H1 (cell line): ENCODE measurements at regions of chr19 and their contacts with region 1.

Region 1: GRCh38 chr19:40444192-40445028 is at the start of gene SERTAD3:
- DNase-seq: peak; percentile 85 to 97
- H3K4me3 ChIP-seq: peak within 1 kb of the TSS; percentile 97 to 99 (median 98)
- H3K27ac ChIP-seq: peak within 1 kb of the TSS; percentile 89
- H3K4me1 ChIP-seq: peaks cover 3 to 9% (median 7%) of the 10 kb centered on the region in 4 experiments; a peak in 6 of 7 replicates
- H3K27me3 ChIP-seq: no peaks in the 10 kb centered on the region
- CTCF ChIP-seq: peak; percentile 12 to 35 (median 17); a peak in 3 of 4 replicates
- EP300 ChIP-seq: no peak
- POLR2A ChIP-seq: peak; percentile 33 to 54
- RAD21 ChIP-seq: peak; percentile 46 to 52
- total RNA-seq, gene SERTAD3: 32.1 and 33.4 TPM in 2 replicates

Region 2: DNA sequence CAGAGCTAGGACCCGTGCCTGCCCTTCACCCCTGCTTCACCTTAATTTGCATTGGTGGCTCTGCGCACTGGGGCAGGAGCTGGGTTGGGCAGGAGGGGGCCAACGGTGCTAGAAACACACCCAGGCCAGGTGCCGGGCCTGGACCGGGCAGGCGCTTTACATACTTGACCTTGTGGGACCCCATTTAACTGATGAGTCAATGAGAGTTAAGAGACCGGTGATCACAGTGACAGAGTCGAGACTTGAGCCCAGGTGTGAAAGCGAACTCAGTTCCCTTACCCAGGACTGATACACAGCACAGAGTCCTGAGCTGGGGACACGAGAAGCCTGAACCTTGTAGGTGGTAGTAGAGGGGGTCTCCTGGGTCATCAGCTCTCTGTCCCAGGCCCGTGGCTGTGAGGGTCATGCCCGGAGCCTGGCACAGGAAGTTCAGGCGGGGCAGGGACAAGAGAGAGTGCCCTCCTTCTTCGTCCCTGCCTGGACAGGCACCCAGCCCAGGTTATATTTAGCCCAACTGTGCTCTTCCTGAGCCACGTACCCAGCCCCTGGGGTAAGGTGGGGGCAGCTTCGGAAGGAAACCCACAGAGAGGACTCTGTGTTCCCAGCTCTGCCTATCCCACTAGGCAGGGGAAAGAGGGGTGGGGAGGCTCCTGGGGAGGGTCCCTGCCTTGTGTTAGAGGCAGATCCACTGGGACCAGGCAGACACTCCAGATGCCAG is 33.1 kb before region 1 on chr19:
- CTCF ChIA-PET with region 1: no interaction called
- POLR2A ChIA-PET with region 1: interaction called, 27 read pairs
- DNase-seq: no peak
- H3K4me3 ChIP-seq: no peak overlapping the region
- H3K27ac ChIP-seq: no peak overlapping the region
- H3K4me1 ChIP-seq: peaks cover 7 to 21% (median 13%) of the 10 kb centered on the region in 4 experiments
- H3K27me3 ChIP-seq: no peaks in the 10 kb centered on the region
- CTCF ChIP-seq: no peak
- EP300 ChIP-seq: no peak
- POLR2A ChIP-seq: no peak
- RAD21 ChIP-seq: no peak

Region 3: GRCh38 chr19:40425450-40426287 is 18.7 kb before region 1 on chr19 and contains the start of gene SERTAD1:
- CTCF ChIA-PET with region 1: interaction called, 14 read pairs
- POLR2A ChIA-PET with region 1: interaction called, 23 read pairs
- DNase-seq: peak; percentile 99
- H3K4me3 ChIP-seq: peak within 1 kb of the TSS; percentile 58 to 79 (median 71)
- H3K27ac ChIP-seq: peak within 1 kb of the TSS; percentile 69; the same call in 1 of the 2 replicates
- H3K4me1 ChIP-seq: peaks cover 0 to 6% (median 4%) of the 10 kb centered on the region in 4 experiments; a peak in 3 of 7 replicates
- H3K27me3 ChIP-seq: no peaks in the 10 kb centered on the region
- CTCF ChIP-seq: peak in 2 of 3 experiments; percentile 53 to 71; a peak in 2 of 4 replicates
- EP300 ChIP-seq: no peak
- POLR2A ChIP-seq: peak; percentile 92 to 96
- RAD21 ChIP-seq: no peak
- total RNA-seq, gene SERTAD1: 4.9 and 5.4 TPM in 2 replicates

Region 4: GRCh38 chr19:40433391-40434216 is 10.8 kb before region 1 on chr19:
- CTCF ChIA-PET with region 1: interaction called, 3 read pairs
- POLR2A ChIA-PET with region 1: interaction called, 40 read pairs
- DNase-seq: peak in 1 of 2 experiments; percentile 86
- H3K4me3 ChIP-seq: peak overlapping the region; percentile 22 to 55 (median 44); a peak in 7 of 8 replicates
- H3K27ac ChIP-seq: peak overlapping the region; percentile 81
- H3K4me1 ChIP-seq: peaks cover 0 to 4% (median 3%) of the 10 kb centered on the region in 4 experiments; a peak in 4 of 7 replicates
- H3K27me3 ChIP-seq: no peaks in the 10 kb centered on the region
- CTCF ChIP-seq: no peak
- EP300 ChIP-seq: no peak
- POLR2A ChIP-seq: peak; percentile 58 to 71
- RAD21 ChIP-seq: no peak

Region 5: GRCh38 chr19:40457953-40458596 is 13.7 kb after region 1 on chr19:
- CTCF ChIA-PET with region 1: interaction called, 49 read pairs
- POLR2A ChIA-PET with region 1: interaction called, 25 read pairs
- DNase-seq: no peak
- H3K4me3 ChIP-seq: no peak overlapping the region
- H3K27ac ChIP-seq: no peak overlapping the region
- H3K4me1 ChIP-seq: no peaks in the 10 kb centered on the region
- H3K27me3 ChIP-seq: no peaks in the 10 kb centered on the region; a peak in 1 of 7 replicates
- CTCF ChIP-seq: no peak
- EP300 ChIP-seq: no peak
- POLR2A ChIP-seq: no peak
- RAD21 ChIP-seq: no peak

Region 6: GRCh38 chr19:40529093-40529954 is 84.9 kb after region 1 on chr19:
- CTCF ChIA-PET with region 1: no interaction called
- POLR2A ChIA-PET with region 1: no interaction called
- DNase-seq: peak; percentile 80 to 96
- H3K4me3 ChIP-seq: peak overlapping the region; percentile 24 to 62 (median 44); a peak in 7 of 8 replicates
- H3K27ac ChIP-seq: no peak overlapping the region
- H3K4me1 ChIP-seq: peaks cover 0 to 7% (median 4%) of the 10 kb centered on the region in 4 experiments; a peak in 6 of 7 replicates
- H3K27me3 ChIP-seq: peaks cover 0 to 4% (median 0%) of the 10 kb centered on the region in 4 experiments; a peak in 2 of 7 replicates
- CTCF ChIP-seq: peak; percentile 87 to 96 (median 93)
- EP300 ChIP-seq: no peak
- POLR2A ChIP-seq: no peak
- RAD21 ChIP-seq: peak; percentile 35 to 39; a peak in 2 of 4 replicates

Region 7: GRCh38 chr19:40598121-40598917 is 153.9 kb after region 1 on chr19:
- CTCF ChIA-PET with region 1: no interaction called
- POLR2A ChIA-PET with region 1: no interaction called
- DNase-seq: peak in 1 of 2 experiments; percentile 97
- H3K4me3 ChIP-seq: peak overlapping the region; percentile 38 to 69 (median 64)
- H3K27ac ChIP-seq: peak overlapping the region; percentile 78
- H3K4me1 ChIP-seq: peaks cover 9 to 33% (median 21%) of the 10 kb centered on the region in 4 experiments
- H3K27me3 ChIP-seq: peaks cover 19 to 47% (median 42%) of the 10 kb centered on the region in 4 experiments
- CTCF ChIP-seq: peak; percentile 95 to 98 (median 97)
- EP300 ChIP-seq: peak in 1 of 2 experiments; percentile 97; a peak in 2 of 3 replicates
- POLR2A ChIP-seq: peak in 1 of 2 experiments; percentile 47; a peak in 1 of 3 replicates
- RAD21 ChIP-seq: peak; percentile 81 to 89

Region 8: DNA sequence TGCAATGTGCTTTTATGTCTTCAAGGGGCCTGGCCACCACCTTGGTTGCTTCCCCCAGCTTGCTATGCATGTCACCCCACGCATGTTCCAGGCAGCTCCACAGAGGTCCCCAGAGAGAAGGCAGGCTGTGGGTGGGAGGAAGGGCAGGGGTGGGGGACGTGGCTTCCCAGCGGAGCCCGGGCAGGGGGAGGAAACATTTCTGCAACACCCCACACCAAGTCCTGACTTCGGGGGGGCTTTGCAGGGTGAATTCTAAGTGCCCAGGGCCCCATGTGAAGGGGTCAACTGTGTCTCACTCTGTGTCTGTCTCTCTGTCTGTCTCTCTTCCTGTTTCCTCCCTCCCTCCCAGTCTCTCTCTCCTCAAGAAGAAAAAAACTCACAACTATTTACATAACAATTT is 196.3 kb after region 1 on chr19:
- CTCF ChIA-PET with region 1: no interaction called
- POLR2A ChIA-PET with region 1: no interaction called
- DNase-seq: no peak
- H3K4me3 ChIP-seq: no peak overlapping the region
- H3K27ac ChIP-seq: no peak overlapping the region
- H3K4me1 ChIP-seq: peaks cover 0 to 3% (median 0%) of the 10 kb centered on the region in 4 experiments; a peak in 1 of 7 replicates
- H3K27me3 ChIP-seq: no peaks in the 10 kb centered on the region; a peak in 4 of 7 replicates
- CTCF ChIP-seq: no peak
- EP300 ChIP-seq: no peak
- POLR2A ChIP-seq: no peak
- RAD21 ChIP-seq: no peak